H1 (cell line): ENCODE measurements at regions of chr12 and their contacts with region 1.

Region 1: DNA sequence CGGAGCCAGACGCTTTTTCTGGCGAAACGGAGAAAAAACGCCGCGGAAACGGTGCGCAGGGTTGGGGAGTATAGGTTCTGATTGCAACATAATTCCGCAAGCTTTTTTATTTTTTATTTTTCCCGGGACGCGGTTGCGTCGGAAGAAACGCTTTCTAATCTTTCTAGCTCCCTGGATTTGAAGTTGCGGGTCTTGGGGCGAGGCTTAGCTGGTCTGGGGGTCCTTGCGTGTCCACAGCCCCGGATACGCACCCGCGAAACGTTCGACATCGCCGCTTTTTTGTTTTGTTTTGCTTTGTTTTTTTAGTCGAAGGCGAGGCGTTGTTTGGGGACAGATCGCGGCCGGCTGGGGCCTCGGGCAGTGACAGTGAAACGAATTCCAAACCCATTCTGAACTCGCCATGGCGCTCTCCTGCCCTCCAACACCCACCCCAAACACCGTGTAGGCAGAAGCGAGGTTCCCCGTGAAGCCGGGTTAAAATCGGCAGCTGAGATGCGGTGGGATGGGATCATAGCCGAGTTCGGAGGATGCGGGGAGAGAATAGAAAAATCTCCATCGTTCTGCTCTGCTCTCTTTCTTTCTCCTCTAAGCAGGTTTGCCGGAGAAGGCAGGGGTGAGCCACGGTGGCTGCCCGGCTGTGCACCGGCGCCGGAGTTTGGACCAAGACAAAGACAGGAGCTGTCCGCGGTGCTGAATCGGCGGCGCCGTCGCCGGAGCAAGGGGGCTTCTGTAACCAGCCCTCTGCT is 8.1 kb upstream of the LHX5 start:
- DNase-seq: peak in 1 of 2 experiments; percentile 96
- H3K4me3 ChIP-seq: peak overlapping the region; percentile 33 to 57 (median 50); a peak in 7 of 8 replicates
- H3K27ac ChIP-seq: no peak overlapping the region
- H3K4me1 ChIP-seq: peaks cover 14 to 44% (median 21%) of the 10 kb centered on the region in 4 experiments
- H3K27me3 ChIP-seq: peaks cover 46 to 69% (median 64%) of the 10 kb centered on the region in 4 experiments
- CTCF ChIP-seq: no peak
- EP300 ChIP-seq: peak in 1 of 2 experiments; percentile 79; a peak in 1 of 3 replicates
- POLR2A ChIP-seq: no peak
- RAD21 ChIP-seq: peak; percentile 1 to 36; a peak in 2 of 4 replicates

Region 2: GRCh38 chr12:113467502-113468364 is 12.0 kb before region 1 on chr12:
- CTCF ChIA-PET with region 1: interaction called, 79 read pairs
- POLR2A ChIA-PET with region 1: interaction called, 15 read pairs
- DNase-seq: peak in 1 of 2 experiments; percentile 82
- H3K4me3 ChIP-seq: peak overlapping the region; percentile 53 to 66 (median 60)
- H3K27ac ChIP-seq: no peak overlapping the region
- H3K4me1 ChIP-seq: peaks cover 4 to 81% (median 55%) of the 10 kb centered on the region in 4 experiments
- H3K27me3 ChIP-seq: peaks cover 94 to 100% (median 99%) of the 10 kb centered on the region in 4 experiments
- CTCF ChIP-seq: no peak
- EP300 ChIP-seq: no peak
- POLR2A ChIP-seq: no peak
- RAD21 ChIP-seq: no peak

Region 3: DNA sequence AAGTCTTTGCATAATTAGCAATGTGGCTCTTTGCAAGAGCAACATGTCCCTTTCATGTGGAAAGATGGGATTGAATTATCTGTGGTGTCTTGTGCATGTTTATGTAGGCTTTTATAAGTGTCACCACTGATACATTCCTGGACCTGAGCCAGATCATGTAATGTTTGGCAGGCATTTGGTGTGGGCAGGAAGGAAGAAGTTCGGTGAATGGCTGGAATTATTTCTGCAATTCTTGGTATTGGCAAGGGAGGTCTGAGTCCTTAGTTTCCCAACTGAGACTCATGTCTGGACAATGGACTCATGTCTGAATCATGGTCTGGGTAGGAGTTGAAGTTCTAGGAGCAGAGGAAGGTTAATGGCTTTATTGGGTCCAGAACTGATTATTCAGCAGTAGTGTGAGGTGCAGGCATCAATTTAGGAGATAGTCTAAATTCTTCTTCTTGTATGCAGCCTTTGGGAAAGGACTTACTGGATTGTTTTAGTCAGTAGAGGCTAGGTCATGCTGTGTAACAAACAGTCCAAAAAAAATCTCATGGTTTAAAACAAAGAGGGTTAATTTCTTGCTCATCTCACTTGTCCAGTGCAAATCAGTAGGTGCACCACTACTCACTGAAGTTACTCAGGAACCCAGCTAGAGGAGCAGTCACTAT is 178.4 kb after region 1 on chr12:
- CTCF ChIA-PET with region 1: no interaction called
- POLR2A ChIA-PET with region 1: no interaction called
- DNase-seq: no peak
- H3K4me3 ChIP-seq: no peak overlapping the region
- H3K27ac ChIP-seq: no peak overlapping the region
- H3K4me1 ChIP-seq: peaks cover 0 to 2% (median 0%) of the 10 kb centered on the region in 4 experiments; a peak in 2 of 7 replicates
- H3K27me3 ChIP-seq: no peaks in the 10 kb centered on the region
- CTCF ChIP-seq: no peak
- EP300 ChIP-seq: no peak
- POLR2A ChIP-seq: no peak
- RAD21 ChIP-seq: no peak